Cardiac septum (tissue), 1 donor: ENCODE measurements at regions of chr4 and their contacts with region 1.

Region 1: GRCh38 chr4:152385551-152385950 is 150.3 kb downstream of the FBXW7 start:
- DNase-seq: no peak

Region 2: DNA sequence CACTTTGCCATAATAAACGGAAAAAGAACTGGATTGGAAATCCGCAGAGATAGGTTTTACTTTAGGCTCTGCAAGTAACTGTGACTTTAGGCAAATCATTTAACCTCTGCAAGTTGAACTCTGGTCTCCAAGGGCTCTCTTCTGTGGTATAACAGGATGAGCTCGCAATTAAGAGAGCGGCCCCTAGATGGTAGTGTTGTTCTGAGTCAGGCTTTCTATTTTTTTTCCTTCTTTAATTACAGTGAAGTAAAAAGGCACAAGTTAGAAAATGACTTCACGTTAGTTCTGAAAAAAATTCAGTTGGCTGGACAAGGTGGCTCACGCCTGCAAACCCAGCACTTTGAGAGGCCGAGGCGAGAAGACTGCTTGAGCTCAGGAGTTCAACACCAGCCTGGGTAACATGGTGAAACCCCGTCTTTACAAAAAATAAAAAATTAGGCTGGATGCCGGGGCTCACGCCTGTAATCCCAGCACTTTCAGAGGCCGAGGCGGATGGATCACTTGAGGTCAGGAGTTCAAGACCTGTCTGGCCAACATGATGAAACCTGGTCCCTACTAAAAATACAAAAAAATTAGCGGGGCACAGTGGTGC is 1268.1 kb before region 1 on chr4:
- intact Hi-C with region 1: loop called (anchors 10 kb)
- DNase-seq: no peak

Region 3: GRCh38 chr4:151674804-151675391 is 710.7 kb before region 1 on chr4:
- intact Hi-C with region 1: loop called (anchors 5 kb)
- DNase-seq: no peak

Region 4: GRCh38 chr4:151948351-151949016 is 437.1 kb before region 1 on chr4:
- intact Hi-C with region 1: no loop called
- DNase-seq: no peak

Region 5: GRCh38 chr4:152591396-152591795 is 205.8 kb after region 1 on chr4:
- intact Hi-C with region 1: no loop called
- DNase-seq: no peak

Region 6: GRCh38 chr4:152831416-152831815 is 445.9 kb after region 1 on chr4:
- intact Hi-C with region 1: no loop called
- DNase-seq: no peak